Right ventricle myocardium inferior (tissue), 1 donor: ENCODE measurements at regions of chr1 and their contacts with region 1.

Region 1: DNA sequence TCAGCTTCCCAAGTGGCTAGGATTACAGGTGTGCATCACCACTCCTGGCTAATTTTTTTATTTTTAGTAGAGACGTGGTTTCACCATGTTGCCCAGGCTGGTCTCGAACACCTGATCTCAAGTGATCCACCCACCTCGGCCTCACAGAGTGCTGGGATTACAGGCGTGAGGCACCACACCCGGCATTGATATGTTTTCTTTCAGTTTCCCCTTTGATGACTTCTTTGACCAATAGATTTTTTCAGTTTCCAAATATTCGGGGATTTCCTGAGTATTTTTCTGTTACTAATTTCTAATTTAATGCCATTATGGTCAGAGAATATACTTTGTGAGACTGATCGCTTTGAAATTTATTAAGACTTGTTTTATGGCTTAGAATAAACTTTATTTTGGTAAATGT is 406.1 kb downstream of the RYR2 start:
- DNase-seq: no peak
- ATAC-seq: no peak

Region 2: DNA sequence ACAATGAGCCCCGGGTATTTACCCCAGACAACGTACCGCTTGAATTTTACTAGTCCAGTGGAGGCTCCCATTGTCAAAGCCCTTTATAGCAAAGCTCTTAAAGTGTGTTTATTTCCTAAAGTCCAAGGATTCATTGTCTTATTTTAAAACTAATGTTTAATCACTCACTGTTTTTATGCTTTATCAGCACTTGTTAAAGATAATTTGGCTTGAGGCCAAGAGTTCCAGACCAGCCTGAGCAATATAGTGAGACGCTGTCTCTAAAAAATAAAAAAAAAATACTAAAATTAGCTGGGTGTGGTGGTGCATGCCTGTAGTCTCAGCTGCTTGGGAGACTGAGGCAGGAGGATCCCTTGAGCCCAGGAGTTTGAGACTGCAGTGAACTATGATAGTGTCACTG is 203.3 kb before region 1 on chr1:
- intact Hi-C with region 1: loop called (anchors 5 kb)
- DNase-seq: no peak
- ATAC-seq: no peak